ENCODE measurements at regions of chr14 and their contacts with region 1.

Region 1: DNA sequence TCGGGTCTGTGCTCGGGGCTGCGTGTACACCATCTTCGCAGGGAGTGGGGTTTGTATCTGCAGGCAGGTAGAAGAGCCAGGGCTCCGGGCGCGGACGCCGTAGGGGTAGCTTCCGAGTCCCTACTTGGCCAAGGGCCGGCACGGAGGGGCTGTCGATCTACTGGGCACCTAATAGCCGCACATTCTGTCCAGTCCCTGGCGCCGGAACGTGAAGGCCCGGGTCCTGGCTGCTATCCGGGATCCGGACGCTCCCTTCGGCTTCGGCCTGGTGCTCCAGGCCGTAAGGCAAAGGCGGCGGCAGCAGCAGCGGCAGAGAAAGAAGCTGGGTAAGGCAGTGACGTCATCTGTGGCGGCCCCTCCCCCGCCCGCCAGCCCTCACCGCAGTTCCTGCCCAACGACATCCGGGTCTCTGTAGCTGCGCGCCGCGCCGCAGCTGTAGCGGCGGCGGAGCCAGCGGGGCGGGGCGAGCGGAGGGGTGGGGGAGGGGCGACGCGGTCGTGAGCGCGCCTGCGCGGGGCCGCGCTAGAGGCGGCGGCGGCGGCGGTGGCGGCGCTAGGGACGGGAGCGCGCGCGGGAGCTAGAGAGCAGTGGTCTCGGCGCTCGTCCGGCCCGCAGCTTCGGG is at the start of gene PPM1A:
- DNase-seq: peak; percentile 97
- H3K4me3 ChIP-seq: peak within 1 kb of the TSS; percentile 87
- H3K27ac ChIP-seq: peak within 1 kb of the TSS; percentile 92
- H3K4me1 ChIP-seq: peaks cover 55% of the 10 kb centered on the region
- CTCF ChIP-seq: no peak
- total RNA-seq, gene PPM1A: 25.4 and 28.8 TPM in 2 replicates

Region 2: DNA sequence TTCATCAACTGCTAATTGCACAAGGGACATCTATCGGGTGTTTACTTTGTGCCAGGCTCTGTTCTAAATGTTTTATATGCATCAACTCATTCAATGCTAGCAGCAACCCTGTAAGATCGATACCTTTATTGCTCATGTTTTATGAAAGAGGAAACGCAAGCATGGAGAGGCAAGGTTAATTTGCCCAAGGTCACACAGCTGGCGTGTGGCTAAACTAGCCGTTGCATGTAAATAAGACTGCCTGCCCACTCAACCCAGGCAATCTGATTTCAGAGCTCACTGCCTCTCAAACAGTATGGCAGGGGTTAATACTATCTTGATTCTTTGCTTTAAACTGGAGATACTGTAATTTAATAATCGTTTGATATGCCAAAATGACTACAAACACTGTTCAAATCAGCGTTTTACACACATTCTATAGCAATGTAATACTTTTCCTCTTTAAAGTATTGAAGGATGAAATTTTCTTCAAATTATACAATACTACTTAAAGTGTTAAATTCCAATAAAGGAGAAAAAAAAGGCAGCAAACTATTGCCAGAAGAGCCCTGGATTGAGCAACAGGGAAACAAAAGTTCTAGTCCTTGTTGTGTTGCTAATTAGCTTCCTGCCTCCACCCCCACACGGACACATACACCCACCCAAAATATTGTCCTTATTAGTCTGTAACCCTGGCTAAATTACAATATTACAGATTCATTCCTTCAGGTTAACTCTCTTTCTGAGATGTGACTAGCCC is 44.5 kb before region 1 on chr14:
- CTCF ChIA-PET with region 1: interaction called, 3 read pairs
- POLR2A ChIA-PET with region 1: interaction called, 49 read pairs
- intact Hi-C with region 1: loop called (anchors 1 kb)
- DNase-seq: peak; percentile 94
- H3K4me3 ChIP-seq: peak overlapping the region; percentile 52
- H3K27ac ChIP-seq: peak overlapping the region; percentile 96
- H3K4me1 ChIP-seq: peaks cover 44% of the 10 kb centered on the region
- CTCF ChIP-seq: no peak

Region 3: DNA sequence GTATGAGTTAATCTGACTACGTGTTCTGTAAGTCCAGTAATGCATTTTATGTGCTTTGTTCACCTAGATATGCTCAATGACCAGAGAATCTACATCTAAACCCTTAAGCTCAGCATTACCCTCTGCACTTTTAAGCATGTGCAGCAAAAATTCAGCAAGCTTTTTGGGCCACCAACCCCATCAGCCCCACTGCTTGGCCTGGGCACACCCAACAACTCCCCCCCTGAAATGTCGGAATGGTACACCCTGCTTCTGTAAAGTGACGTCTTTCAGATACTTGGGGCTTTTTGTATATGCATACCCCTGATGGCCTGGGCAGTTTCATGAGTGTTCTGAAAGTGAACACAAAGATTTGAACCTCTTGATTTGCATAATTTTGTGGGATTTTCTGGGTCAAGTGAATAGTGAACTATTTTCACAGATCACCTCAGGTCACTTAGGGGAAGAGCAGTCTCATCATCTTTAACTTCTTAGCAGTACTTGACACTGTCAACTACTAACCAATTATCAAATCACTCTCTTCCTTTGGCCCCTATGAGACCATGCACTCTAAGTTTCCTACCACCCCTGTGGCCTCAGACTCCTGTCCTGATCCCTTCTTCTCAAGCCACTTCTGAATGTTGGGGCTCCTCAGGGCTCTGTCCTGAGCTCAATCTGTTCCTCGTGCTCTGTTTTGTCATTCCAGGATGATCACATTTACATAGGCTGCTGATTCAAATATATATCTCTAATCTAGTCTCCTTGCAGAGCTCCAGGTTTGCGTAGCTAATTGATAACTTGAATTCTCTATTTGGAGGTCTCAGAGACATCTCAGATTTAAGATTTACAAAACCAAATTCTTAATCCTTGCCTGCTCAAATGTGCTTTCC is 36.1 kb before region 1 on chr14:
- CTCF ChIA-PET with region 1: no interaction called
- POLR2A ChIA-PET with region 1: interaction called, 21 read pairs
- intact Hi-C with region 1: no loop called
- DNase-seq: peak; percentile 39
- H3K4me3 ChIP-seq: no peak overlapping the region
- H3K27ac ChIP-seq: no peak overlapping the region
- H3K4me1 ChIP-seq: peaks cover 21% of the 10 kb centered on the region
- CTCF ChIP-seq: no peak

Region 4: DNA sequence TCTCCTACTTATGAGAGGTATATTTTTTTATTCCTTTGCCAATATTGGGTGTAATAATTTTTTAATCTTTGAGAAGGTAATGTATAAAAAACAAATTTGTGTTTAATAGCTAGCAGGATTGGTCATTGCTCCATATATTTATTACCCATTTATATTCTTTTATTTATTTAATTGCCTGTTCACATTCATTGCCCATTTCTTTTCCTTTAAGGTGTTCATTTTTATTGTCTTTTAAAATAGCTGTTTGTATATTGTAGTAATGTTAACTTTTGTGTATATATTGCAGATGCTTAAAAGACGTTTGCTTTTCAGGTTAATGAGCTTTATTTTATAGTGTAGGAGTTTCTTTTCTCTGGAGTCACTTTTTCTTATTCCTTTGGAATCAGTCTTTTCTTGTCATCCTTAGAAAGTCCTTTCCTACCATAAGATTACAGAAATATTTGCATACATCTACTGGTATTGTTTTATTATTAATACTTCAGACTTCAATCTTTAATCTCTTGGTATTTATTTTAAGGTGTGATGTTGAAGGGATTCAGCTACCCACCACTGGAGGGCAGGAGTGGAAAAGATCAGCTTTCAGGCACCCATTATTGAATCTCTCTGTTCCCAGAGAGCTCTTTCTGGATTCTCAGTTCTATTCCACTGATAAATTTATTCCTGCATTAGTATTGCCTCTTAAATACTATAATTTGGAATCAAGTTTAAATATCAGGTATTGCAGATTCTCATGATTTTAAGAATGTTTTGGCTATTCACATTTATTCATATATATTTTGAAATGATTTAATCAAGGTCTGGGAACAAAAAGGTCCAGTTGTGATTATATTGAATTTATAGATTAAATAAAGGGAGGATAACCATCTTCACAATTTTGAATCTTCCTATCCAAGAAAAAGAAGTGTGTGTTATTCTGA is 17.5 kb after region 1 on chr14:
- CTCF ChIA-PET with region 1: no interaction called
- POLR2A ChIA-PET with region 1: interaction called, 32 read pairs
- intact Hi-C with region 1: no loop called
- DNase-seq: peak; percentile 48
- H3K4me3 ChIP-seq: no peak overlapping the region
- H3K27ac ChIP-seq: no peak overlapping the region
- H3K4me1 ChIP-seq: no peaks in the 10 kb centered on the region
- CTCF ChIP-seq: peak; percentile 92

Region 5: GRCh38 chr14:60561845-60562746 is 313.3 kb after region 1 on chr14:
- CTCF ChIA-PET with region 1: no interaction called
- POLR2A ChIA-PET with region 1: no interaction called
- intact Hi-C with region 1: loop called (anchors 5 kb)
- DNase-seq: peak; percentile 90
- H3K4me3 ChIP-seq: no peak overlapping the region
- H3K27ac ChIP-seq: no peak overlapping the region
- H3K4me1 ChIP-seq: peaks cover 78% of the 10 kb centered on the region
- CTCF ChIP-seq: peak; percentile 97

Region 6: GRCh38 chr14:60965402-60965801 is 716.6 kb after region 1 on chr14:
- CTCF ChIA-PET with region 1: no interaction called
- POLR2A ChIA-PET with region 1: no interaction called
- intact Hi-C with region 1: no loop called
- DNase-seq: no peak
- H3K4me3 ChIP-seq: no peak overlapping the region
- H3K27ac ChIP-seq: no peak overlapping the region
- H3K4me1 ChIP-seq: peaks cover 4% of the 10 kb centered on the region
- CTCF ChIP-seq: no peak